A673 (cell line): ENCODE measurements at regions of chr4 and their contacts with region 1.

Region 1: GRCh38 chr4:112327965-112328733 is 31.0 kb downstream of the ALPK1 start:
- DNase-seq: peak; percentile 73
- H3K4me3 ChIP-seq: no peak overlapping the region
- H3K27ac ChIP-seq: no peak overlapping the region
- H3K4me1 ChIP-seq: no peaks in the 10 kb centered on the region
- H3K27me3 ChIP-seq: no peaks in the 10 kb centered on the region
- CTCF ChIP-seq: peak; percentile 61

Region 2: DNA sequence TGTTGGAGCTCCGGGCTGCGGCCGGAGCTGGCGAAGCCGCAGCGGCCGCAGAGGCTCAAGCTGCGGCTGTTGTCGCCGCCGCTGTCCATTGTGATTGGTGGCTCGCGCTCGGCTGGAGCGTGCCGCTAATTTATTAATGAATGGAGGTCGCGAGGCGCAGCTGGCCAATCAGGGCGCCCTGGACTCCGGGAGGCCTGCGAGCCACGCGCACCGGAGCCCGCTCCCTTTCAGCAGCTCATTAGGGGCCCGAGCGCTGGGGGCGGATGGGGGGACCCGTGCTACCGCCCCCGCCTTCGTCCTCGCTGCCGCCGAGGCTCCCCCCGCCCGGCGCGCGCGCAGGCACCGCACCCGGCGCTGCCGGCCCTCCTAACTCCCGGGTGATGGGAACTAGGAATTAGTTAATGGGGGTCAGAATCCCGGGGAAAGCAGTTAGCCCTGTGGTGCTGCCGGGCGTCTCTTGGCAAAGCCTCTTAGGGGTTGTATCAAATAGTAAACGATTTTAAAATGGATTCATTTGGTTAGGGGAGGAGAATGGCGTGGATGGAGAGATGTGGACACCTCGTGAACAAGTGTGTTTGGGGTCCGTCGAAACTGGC is 188.4 kb after region 1 on chr4:
- CTCF ChIA-PET with region 1: interaction called, 11 read pairs
- POLR2A ChIA-PET with region 1: no interaction called
- intact Hi-C with region 1: no loop called
- DNase-seq: no peak
- H3K4me3 ChIP-seq: peak overlapping the region; percentile 51
- H3K27ac ChIP-seq: no peak overlapping the region
- H3K4me1 ChIP-seq: peaks cover 33% of the 10 kb centered on the region
- H3K27me3 ChIP-seq: peaks cover 98% of the 10 kb centered on the region
- CTCF ChIP-seq: no peak

Region 3: DNA sequence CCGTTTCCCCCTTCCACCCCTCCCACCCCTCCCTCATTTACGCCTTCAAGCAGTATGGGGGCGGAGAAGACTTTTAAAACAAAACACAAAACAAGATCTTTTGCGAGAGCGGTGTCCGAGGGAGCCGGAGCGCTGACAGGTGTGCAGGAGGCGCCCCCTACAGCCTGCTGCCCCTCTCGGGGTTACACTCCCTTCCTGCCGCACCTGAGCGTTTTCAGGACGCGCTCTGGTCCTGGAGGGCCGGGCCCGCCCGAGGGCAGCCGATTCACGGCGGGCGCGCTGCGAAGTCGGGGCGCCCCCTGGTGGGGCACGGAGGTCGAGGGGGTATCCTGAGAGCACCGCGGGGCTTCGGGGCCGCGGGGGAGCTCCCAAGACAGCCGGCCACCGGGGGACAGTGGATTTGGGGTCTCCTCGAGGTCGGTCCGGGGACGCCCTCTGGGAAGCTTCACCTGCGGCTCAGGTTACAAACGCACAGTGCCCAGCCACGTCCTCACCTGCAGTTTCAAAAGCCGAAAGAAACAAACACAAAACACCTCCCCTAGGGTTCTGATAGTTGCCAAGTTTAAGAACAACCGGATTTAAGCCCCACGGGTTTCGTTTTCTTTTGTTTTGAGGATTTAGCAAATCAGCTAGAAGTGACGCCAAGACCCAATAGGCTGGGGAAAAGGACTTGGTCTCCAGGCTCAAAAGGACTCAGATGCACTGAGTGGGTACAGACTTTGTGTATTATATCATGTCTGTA is 195.8 kb after region 1 on chr4:
- CTCF ChIA-PET with region 1: interaction called, 5 read pairs
- POLR2A ChIA-PET with region 1: no interaction called
- intact Hi-C with region 1: loop called (anchors 1 kb)
- DNase-seq: peak; percentile 75
- H3K4me3 ChIP-seq: peak overlapping the region; percentile 50
- H3K27ac ChIP-seq: no peak overlapping the region
- H3K4me1 ChIP-seq: peaks cover 6% of the 10 kb centered on the region
- H3K27me3 ChIP-seq: peaks cover 39% of the 10 kb centered on the region
- CTCF ChIP-seq: peak; percentile 93

Region 4: DNA sequence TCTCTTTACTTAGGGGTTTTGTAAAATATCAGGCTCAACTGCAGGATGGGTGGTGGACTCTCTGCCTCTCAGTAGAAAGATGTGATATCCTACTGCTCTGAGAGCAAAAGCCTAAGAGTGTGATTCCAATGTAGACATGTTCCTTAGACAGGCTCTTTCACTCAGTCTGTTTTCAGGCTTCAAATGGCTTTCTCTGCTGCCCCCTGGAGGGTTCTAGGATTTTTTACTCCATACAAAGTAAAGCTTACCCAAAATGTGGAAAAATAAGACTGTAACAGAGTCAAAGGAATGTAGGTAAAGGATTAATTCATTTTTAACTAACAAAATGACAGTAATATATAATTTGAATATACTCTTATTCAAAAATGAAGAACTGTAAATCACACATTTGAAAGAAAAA is 276.4 kb after region 1 on chr4:
- CTCF ChIA-PET with region 1: no interaction called
- POLR2A ChIA-PET with region 1: no interaction called
- intact Hi-C with region 1: loop called (anchors 1 kb)
- DNase-seq: peak; percentile 66
- H3K4me3 ChIP-seq: no peak overlapping the region
- H3K27ac ChIP-seq: no peak overlapping the region
- H3K4me1 ChIP-seq: no peaks in the 10 kb centered on the region
- H3K27me3 ChIP-seq: no peaks in the 10 kb centered on the region
- CTCF ChIP-seq: peak; percentile 70